Panc1 (cell line): ENCODE measurements at regions of chr19 and their contacts with region 1.

Region 1: GRCh38 chr19:36687214-36688056 is at the start of gene ZNF567:
- DNase-seq: peak; percentile 76
- ATAC-seq: peak; percentile 98
- H3K4me3 ChIP-seq: peak within 1 kb of the TSS; percentile 60 to 97
- H3K27ac ChIP-seq: peak within 1 kb of the TSS; percentile 90
- H3K4me1 ChIP-seq: no peaks in the 10 kb centered on the region; the same call in 1 of the 2 replicates
- H3K27me3 ChIP-seq: no peaks in the 10 kb centered on the region
- CTCF ChIP-seq: no peak
- total RNA-seq, gene ZNF567: 11.3 TPM

Region 2: GRCh38 chr19:36665832-36666231 is 21.6 kb before region 1 on chr19:
- CTCF ChIA-PET with region 1: interaction called, 5 read pairs
- POLR2A ChIA-PET with region 1: interaction called, 13 read pairs
- in situ Hi-C with region 1: no loop called
- intact Hi-C with region 1: no loop called
- DNase-seq: no peak
- ATAC-seq: no peak
- H3K4me3 ChIP-seq: peak overlapping the region; percentile 75 to 98
- H3K27ac ChIP-seq: peak overlapping the region; percentile 90
- H3K4me1 ChIP-seq: peaks cover 11% of the 10 kb centered on the region; the same call in 1 of the 2 replicates
- H3K27me3 ChIP-seq: no peaks in the 10 kb centered on the region
- CTCF ChIP-seq: no peak